Colonic mucosa (tissue), 4 donors: ENCODE measurements at regions of chr12 and their contacts with region 1.

Region 1: GRCh38 chr12:105279460-105280056 is 43.6 kb upstream of the APPL2 start:
- DNase-seq: peak; percentile 67
- H3K4me3 ChIP-seq: no peak overlapping the region
- H3K27ac ChIP-seq: no peak overlapping the region
- H3K4me1 ChIP-seq: no peaks in the 10 kb centered on the region
- H3K27me3 ChIP-seq: no peaks in the 10 kb centered on the region
- CTCF ChIP-seq: peak; percentile 76

Region 2: DNA sequence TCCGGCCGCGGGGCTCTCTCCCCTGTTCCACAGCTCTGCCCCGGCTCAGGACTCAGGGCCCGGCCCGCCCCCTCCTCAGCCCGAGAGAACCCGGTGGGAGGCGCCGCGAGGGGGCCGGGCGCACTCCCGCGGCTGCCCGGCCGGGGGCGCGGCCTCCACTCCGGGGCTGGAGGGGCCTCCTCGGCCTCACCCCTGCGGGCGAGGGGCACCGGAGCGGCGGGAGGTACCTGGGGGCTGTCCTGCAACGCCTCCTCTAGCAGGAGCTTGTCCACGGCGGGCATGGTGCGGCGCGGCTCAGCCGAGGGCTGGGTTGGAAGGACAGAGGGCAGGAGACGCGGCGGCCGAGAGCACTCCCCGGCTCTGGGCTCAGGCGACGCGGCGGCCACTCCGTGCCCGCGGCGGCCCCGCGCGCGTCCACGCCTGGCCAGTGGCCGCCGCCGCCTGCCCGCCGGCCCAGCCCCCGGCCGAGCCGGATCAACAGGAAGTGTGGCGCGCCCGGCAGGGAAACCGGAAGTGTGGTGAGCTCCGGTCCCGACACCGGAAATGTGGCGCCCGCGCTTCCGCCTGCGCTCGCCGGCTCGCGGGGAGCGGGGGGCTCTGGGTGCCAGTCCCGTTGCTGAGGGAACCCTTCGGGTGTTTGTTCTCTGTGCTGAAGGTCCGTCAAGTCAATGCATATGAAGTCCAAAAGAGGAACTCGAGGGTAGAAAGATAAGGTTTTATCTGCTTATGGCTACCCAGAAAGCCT is 43.7 kb before region 1 on chr12 and contains the start of gene APPL2:
- intact Hi-C with region 1: no loop called
- DNase-seq: peak; percentile 90
- H3K4me3 ChIP-seq: peak within 1 kb of the TSS; percentile 86
- H3K27ac ChIP-seq: peak within 1 kb of the TSS; percentile 96
- H3K4me1 ChIP-seq: peaks cover 19% of the 10 kb centered on the region
- H3K27me3 ChIP-seq: no peaks in the 10 kb centered on the region
- CTCF ChIP-seq: no peak
- total RNA-seq, gene APPL2: 70.8 to 86.0 TPM

Region 3: DNA sequence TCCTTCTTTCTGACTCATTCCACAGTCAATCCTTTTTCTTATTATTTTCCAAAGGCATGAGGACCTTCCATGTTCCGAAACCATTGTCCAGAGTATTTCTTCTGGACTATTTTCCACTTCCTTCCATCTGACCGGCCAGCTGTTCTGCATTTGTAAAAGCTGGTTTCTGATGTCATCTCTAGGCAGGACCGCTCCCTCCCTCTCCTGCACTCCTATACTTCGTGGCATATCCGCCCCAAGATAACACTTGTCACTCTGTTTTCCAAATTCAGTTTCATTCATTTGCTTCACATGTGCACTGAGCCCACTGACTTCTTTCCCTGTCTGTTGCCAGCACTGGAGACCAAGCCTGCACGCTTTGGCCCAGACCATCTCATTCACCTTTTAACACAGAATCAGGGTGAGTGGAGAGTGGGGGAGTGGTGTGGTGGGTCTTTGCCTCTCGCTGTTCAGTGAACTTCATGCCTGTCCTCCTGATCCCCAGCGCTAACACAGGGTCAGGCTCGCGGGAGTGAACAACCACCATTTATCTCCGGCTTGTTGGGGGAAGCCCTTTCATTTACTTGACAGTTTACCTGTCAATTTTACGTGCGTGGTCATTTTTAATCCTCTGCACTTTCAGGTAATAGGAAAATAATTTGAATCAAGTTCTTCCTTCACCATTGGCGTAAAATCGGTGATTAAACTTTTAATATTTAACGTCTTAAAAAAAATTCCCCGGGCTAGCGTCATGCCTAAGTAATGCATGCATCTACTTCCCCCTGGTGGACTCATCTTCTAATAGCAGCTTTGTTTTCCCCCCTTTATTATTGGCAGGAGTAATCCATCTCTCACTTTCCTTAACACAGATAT is 103.4 kb after region 1 on chr12:
- intact Hi-C with region 1: loop called (anchors 5 kb)
- DNase-seq: peak; percentile 40
- H3K4me3 ChIP-seq: no peak overlapping the region
- H3K27ac ChIP-seq: no peak overlapping the region
- H3K4me1 ChIP-seq: no peaks in the 10 kb centered on the region
- H3K27me3 ChIP-seq: no peaks in the 10 kb centered on the region
- CTCF ChIP-seq: peak; percentile 76

Region 4: GRCh38 chr12:105899589-105899988 is 620.0 kb after region 1 on chr12:
- intact Hi-C with region 1: no loop called
- DNase-seq: no peak
- H3K4me3 ChIP-seq: no peak overlapping the region
- H3K27ac ChIP-seq: no peak overlapping the region
- H3K4me1 ChIP-seq: no peaks in the 10 kb centered on the region
- H3K27me3 ChIP-seq: no peaks in the 10 kb centered on the region
- CTCF ChIP-seq: no peak